Activated T-helper 2 cell treated with anti-CD3 and anti-CD28 coated beads, Interferon-gamma antibody, Interleukin-2, Interleukin-4, amounts not matched to agents 10 μg/mL and 5 μg/mL and 100 μg/mL, durations not matched to agents 14 hours and 24 hours and 36 hours (primary cell): ENCODE measurements at regions of chr11 and their contacts with region 1.

Region 1: DNA sequence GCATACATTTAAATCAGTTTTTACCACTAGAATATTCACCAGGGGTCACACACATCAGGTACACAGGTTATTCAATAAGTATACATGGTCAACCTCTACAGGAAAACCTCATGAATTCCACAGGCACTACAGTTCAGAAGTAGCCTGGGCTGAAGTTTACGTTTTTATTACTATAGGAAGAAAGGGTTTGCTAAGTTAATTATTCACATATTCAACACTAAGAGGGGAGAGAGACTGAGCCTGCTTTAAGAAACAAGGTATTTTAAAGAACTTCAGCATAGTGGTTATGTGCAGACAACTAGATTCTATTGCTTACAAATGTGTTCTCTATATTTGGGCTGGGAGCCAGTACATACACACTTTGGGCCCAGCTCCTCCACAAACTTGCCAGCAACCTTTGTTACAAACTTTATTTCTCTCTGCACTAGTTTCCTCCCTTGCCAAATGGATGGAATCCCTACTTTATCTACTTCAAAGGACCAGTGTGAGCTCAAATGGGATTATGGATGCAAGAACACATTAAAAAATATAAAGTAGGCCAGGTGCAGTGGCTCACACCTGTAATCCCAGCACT is 31.9 kb downstream of the IL18BP start:
- DNase-seq: no peak
- H3K4me3 Mint-ChIP-seq: no peak overlapping the region
- H3K27ac Mint-ChIP-seq: no peak overlapping the region
- H3K4me1 Mint-ChIP-seq: peaks cover 10% of the 10 kb centered on the region
- H3K27me3 Mint-ChIP-seq: no peaks in the 10 kb centered on the region

Region 2: DNA sequence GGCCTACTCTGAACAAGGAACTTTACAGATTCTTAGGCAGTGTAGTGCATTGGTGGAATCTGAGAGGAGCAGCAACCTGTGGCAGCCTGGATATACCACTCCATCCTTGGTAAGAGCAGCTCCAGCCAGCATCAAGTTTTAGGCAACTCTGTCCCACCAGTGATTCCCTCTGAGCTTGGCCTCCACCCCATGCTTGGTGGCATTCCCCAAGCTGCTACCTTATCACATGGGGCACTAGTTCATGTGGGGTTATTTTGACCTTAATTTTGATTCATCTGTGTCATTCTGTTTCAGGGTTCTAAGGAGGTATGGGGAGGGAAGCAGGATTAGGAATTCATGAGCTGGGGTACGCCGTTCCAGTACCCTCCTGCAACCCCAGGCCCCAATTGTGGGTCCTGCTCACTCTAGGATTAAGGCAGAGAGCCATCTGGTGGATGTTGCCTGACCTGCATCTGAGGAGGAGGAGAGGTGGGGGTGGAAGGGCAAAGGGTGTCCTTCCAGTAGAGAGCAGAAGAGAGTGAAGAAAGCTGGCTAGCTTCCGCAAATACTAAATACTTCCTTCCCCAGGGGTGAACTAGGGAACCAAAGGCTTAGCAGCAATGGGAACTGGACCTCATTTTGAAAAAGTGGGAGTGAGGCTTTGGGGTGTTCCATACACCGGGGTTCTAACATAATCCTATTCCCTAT is 60.6 kb after region 1 on chr11:
- intact Hi-C with region 1: loop called (anchors 1 kb)
- DNase-seq: peak; percentile 53
- H3K4me3 Mint-ChIP-seq: no peak overlapping the region
- H3K27ac Mint-ChIP-seq: peak overlapping the region; percentile 58
- H3K4me1 Mint-ChIP-seq: peaks cover 20% of the 10 kb centered on the region
- H3K27me3 Mint-ChIP-seq: no peaks in the 10 kb centered on the region